Activated CD8-positive, alpha-beta memory T cell treated with anti-CD3 and anti-CD28 coated beads, Interleukin-2, amount 10 ng/mL, durations not matched to agents 7 days and 5 days (primary cell): ENCODE measurements at regions of chrX and their contacts with region 1.

Region 1: GRCh38 chrX:153491351-153491914 is 3.3 kb upstream of the BGN start:
- DNase-seq: no peak
- ATAC-seq: no peak
- H3K4me3 Mint-ChIP-seq: no peak overlapping the region
- H3K27ac Mint-ChIP-seq: no peak overlapping the region
- H3K4me1 Mint-ChIP-seq: no peaks in the 10 kb centered on the region
- H3K27me3 Mint-ChIP-seq: no peaks in the 10 kb centered on the region

Region 2: DNA sequence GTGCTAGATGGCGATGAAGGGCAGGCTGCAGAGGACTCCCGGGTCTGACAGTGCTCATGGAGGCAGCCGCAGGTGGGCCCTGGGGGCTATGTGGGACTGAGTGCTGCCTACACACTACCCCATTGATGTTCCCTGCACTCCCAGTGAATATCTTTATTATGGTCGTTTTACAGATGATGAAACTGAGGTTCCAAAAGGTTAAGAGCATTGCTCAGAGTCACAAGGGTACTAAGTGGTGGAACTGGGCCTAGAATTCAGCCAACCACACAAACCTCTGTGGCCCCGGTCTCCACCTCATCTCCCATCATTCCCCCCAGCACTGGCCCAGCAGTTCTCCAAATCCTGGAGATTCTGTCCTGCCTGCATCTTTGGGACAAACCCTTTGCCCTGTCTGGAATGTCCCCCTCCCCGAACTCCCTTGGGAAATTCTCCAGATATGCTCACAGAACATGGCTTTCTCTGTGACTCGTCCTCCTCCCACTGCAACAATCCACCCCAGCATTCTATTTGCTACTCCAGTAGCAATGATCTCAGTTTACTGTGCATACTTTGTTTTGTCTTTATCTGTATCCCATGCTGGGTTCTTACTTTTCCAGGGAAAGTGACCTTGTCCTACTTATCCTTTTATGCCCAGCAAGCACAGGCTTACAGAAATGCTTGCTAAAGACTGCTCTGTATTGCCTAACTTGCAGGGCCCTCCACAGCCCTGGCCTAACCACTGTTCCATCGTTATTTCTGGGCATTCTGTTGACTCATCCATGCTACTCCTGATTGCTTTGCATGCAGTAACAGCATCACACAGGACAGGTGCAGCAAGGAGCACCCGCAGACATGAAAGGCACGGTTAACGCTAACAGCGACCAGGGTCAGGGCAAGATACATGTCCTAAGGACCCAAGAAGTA is 183.9 kb before region 1 on chrX:
- CTCF ChIA-PET with region 1: no interaction called
- DNase-seq: no peak
- ATAC-seq: no peak
- H3K4me3 Mint-ChIP-seq: no peak overlapping the region
- H3K27ac Mint-ChIP-seq: no peak overlapping the region
- H3K4me1 Mint-ChIP-seq: no peaks in the 10 kb centered on the region
- H3K27me3 Mint-ChIP-seq: peaks cover 20% of the 10 kb centered on the region

Region 3: DNA sequence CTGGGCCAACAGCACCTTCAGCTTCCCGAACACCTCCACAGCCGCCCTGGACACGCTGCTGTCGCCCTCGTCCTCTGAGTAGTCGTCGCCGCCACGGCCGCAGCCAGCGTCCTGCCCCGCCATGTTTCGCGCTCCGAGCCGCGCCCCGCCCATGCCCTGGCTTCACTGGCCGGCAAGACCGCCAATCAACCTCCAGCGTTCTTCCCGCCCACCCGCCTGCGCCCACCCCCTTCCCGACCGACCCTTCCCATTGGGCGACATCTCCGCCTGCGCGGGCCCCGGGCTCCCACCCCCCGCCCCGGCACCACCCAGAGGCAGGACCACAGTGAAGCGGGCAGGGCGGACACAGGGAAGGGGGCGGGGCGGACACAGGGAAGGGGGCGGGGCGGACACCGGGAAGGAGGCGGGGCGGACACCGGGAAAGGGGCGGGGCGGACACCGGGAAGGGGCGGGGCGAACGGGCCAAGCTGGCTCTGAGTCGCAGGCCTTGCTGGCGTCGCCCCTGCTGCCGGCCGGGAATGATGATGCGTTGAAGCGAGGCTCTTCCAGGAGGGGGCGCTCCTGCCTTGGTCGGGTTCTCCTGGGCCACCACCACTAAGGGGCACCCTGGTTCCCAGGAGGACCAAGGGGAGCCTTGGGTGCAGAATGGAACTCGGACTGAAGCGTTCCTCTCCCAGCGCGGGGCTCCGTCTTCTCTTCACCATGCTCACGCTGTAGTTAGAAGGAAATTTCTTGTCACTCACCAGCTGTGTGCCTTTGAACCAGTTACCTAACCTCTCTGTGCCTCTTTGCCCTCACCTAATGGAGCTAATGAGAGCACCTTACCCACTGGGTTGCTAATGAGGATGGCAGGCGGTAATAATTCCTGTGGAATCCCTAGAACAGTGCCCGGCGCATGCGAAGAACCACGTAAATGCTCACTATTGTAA is 20.7 kb before region 1 on chrX and contains the start of gene HAUS7:
- CTCF ChIA-PET with region 1: interaction called, 12 read pairs
- DNase-seq: peak; percentile 90
- ATAC-seq: peak; percentile 87
- H3K4me3 Mint-ChIP-seq: peak within 1 kb of the TSS; percentile 82
- H3K27ac Mint-ChIP-seq: peak within 1 kb of the TSS; percentile 81
- H3K4me1 Mint-ChIP-seq: peaks cover 11% of the 10 kb centered on the region
- H3K27me3 Mint-ChIP-seq: peaks cover 5% of the 10 kb centered on the region
- total RNA-seq, gene HAUS7: 54.4 to 56.3 TPM

Region 4: DNA sequence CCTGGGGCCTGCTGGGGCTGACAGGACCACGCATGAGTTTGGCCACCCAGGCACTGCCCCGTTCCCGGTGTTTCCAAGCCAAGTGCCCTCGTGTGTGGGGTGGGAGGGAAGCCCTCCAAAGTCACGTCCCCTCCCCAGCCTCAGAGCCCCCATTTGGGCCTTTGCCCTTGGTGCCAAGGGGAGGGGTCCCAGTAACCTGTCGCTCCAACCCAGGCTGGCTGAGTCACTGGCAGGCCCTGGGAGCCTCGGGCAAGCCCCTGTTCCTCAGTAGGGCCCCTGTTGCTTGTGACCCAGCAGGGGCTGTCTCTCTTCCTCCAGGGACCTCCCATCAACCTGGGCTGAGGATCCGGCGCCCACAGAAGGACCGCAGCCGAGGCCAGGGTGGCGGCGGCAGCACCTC is 10.4 kb before region 1 on chrX:
- CTCF ChIA-PET with region 1: no interaction called
- DNase-seq: no peak
- ATAC-seq: no peak
- H3K4me3 Mint-ChIP-seq: no peak overlapping the region
- H3K27ac Mint-ChIP-seq: no peak overlapping the region
- H3K4me1 Mint-ChIP-seq: no peaks in the 10 kb centered on the region
- H3K27me3 Mint-ChIP-seq: peaks cover 3% of the 10 kb centered on the region